ENCODE measurements at regions of chr5 and their contacts with region 1.

Region 1: DNA sequence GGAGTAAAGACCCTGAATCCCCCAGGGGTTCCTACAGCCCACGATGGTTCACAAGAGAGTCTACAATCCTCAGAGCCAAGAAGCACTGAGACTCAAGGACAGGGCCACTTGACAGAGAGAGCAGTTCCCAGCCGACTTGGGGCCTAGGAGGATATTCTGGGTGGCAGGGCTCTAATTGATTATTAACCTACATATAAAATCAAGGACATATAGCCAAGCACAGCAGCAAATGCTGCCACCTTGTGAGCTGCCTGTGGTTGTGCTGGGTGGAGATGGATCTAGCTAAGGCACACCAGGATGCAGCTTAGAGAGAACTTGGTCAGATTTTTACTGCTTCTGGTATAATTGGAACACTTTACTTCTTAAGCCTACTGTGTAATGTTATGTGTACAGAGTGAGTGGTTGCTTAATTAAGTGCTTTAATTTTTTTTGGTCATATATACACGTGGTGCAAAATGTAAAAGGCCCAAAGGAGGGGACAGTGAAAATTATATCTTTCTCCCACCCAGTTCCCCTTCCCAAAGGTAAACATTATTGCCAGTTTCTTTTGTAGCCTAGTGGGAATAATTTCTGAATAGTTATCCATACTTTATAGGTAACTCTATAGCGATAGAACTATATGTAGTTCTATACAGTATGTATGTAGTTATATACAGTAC is 78.8 kb downstream of the F2RL2 start:
- DNase-seq: peak; percentile 70
- ATAC-seq: peak; percentile 87
- H3K4me3 ChIP-seq: no peak overlapping the region
- H3K27ac ChIP-seq: peak overlapping the region; percentile 21
- H3K4me1 ChIP-seq: peaks cover 73% of the 10 kb centered on the region
- H3K27me3 ChIP-seq: no peaks in the 10 kb centered on the region
- CTCF ChIP-seq: peak; percentile 87
- EP300 ChIP-seq: no peak
- POLR2A ChIP-seq: no peak
- RAD21 ChIP-seq: peak; percentile 89

Region 2: GRCh38 chr5:76337953-76338451 is 206.4 kb before region 1 on chr5:
- CTCF ChIA-PET with region 1: interaction called, 4 read pairs
- POLR2A ChIA-PET with region 1: no interaction called
- in situ Hi-C with region 1: no loop called
- intact Hi-C with region 1: loop called (anchors 1 kb)
- DNase-seq: peak; percentile 60
- ATAC-seq: peak; percentile 88
- H3K4me3 ChIP-seq: no peak overlapping the region
- H3K27ac ChIP-seq: no peak overlapping the region
- H3K4me1 ChIP-seq: peaks cover 28% of the 10 kb centered on the region
- H3K27me3 ChIP-seq: no peaks in the 10 kb centered on the region
- CTCF ChIP-seq: peak; percentile 71
- EP300 ChIP-seq: no peak
- POLR2A ChIP-seq: no peak
- RAD21 ChIP-seq: peak; percentile 45; the same call in 1 of the 2 replicates

Region 3: GRCh38 chr5:76556511-76557221 is 12.3 kb after region 1 on chr5:
- CTCF ChIA-PET with region 1: no interaction called
- POLR2A ChIA-PET with region 1: no interaction called
- in situ Hi-C with region 1: no loop called
- intact Hi-C with region 1: no loop called
- DNase-seq: no peak
- ATAC-seq: no peak
- H3K4me3 ChIP-seq: no peak overlapping the region
- H3K27ac ChIP-seq: no peak overlapping the region
- H3K4me1 ChIP-seq: no peaks in the 10 kb centered on the region
- H3K27me3 ChIP-seq: no peaks in the 10 kb centered on the region
- CTCF ChIP-seq: no peak
- EP300 ChIP-seq: no peak
- POLR2A ChIP-seq: no peak
- RAD21 ChIP-seq: no peak

Region 4: DNA sequence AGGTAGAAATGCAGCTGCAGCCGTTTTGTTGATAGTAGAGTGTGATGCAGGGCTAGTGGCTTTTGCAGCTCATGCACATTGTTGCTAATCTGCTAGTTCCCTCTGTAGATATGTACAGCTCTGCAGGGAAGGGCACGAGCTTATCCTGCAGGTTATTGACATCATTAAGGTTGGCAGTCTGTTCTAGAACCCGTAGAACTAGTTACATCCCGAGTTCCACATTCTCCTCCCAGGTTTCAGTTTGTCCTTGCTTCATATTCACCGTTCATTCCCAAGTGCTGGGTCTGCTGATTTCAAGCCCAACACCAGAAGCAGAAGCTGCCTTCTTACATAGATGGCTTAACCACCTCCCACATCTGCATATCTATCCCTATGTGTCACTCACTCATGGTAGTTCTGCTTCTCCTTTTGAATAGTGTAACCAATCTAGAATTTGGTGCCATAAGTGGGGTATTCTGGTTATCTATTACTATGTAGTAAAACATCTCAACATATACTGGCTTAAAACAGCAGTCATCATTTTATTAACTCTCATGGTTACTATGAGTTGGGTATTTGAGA is 446.6 kb after region 1 on chr5:
- CTCF ChIA-PET with region 1: no interaction called
- POLR2A ChIA-PET with region 1: no interaction called
- in situ Hi-C with region 1: no loop called
- intact Hi-C with region 1: no loop called
- DNase-seq: no peak
- ATAC-seq: no peak
- H3K4me3 ChIP-seq: no peak overlapping the region
- H3K27ac ChIP-seq: no peak overlapping the region
- H3K4me1 ChIP-seq: no peaks in the 10 kb centered on the region
- H3K27me3 ChIP-seq: peaks cover 0 to 5% of the 10 kb centered on the region in 2 experiments; a peak in 1 of 5 replicates
- CTCF ChIP-seq: no peak
- EP300 ChIP-seq: no peak
- POLR2A ChIP-seq: no peak
- RAD21 ChIP-seq: no peak

Measured in HepG2 (cell line).